ENCODE measurements at regions of chr10 and their contacts with region 1.

Region 1: GRCh38 chr10:119542988-119543813 is 682 bp upstream of the RGS10 start:
- DNase-seq: peak; percentile 78
- ATAC-seq: peak; percentile 37
- H3K4me3 Mint-ChIP-seq: peak overlapping the region; percentile 78
- H3K27ac Mint-ChIP-seq: peak overlapping the region; percentile 86
- H3K4me1 Mint-ChIP-seq: peaks cover 38% of the 10 kb centered on the region
- H3K27me3 Mint-ChIP-seq: peaks cover 14% of the 10 kb centered on the region

Region 2: GRCh38 chr10:119494236-119495060 is 48.8 kb before region 1 on chr10:
- CTCF ChIA-PET with region 1: interaction called, 16 read pairs
- POLR2A ChIA-PET with region 1: interaction called, 10 read pairs
- DNase-seq: no peak
- ATAC-seq: no peak
- H3K4me3 Mint-ChIP-seq: no peak overlapping the region
- H3K27ac Mint-ChIP-seq: peak overlapping the region; percentile 79
- H3K4me1 Mint-ChIP-seq: peaks cover 83% of the 10 kb centered on the region
- H3K27me3 Mint-ChIP-seq: no peaks in the 10 kb centered on the region

Region 3: DNA sequence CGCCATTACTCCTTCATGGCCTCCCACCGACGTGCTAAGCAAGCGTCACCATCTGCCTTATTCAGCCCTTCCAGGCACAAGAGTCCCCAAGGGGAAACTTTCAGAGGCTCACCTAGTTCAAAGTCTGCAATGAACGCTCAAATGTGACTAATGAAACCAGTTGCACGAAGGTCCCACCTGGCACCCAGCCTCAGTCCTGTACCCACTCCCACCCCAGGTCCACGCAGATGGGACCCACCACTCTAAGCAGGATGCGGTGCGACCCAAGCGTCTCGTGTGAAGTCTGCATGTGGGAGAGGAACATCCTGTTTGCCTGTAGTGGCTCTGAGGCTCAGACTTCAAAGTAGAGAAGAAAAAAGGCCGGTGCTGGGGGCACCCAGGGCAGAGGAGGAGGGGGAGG is 41.0 kb before region 1 on chr10:
- CTCF ChIA-PET with region 1: interaction called, 13 read pairs
- POLR2A ChIA-PET with region 1: interaction called, 10 read pairs
- DNase-seq: peak; percentile 90
- ATAC-seq: peak; percentile 84
- H3K4me3 Mint-ChIP-seq: peak overlapping the region; percentile 70
- H3K27ac Mint-ChIP-seq: peak overlapping the region; percentile 98
- H3K4me1 Mint-ChIP-seq: peaks cover 94% of the 10 kb centered on the region
- H3K27me3 Mint-ChIP-seq: no peaks in the 10 kb centered on the region

Region 4: DNA sequence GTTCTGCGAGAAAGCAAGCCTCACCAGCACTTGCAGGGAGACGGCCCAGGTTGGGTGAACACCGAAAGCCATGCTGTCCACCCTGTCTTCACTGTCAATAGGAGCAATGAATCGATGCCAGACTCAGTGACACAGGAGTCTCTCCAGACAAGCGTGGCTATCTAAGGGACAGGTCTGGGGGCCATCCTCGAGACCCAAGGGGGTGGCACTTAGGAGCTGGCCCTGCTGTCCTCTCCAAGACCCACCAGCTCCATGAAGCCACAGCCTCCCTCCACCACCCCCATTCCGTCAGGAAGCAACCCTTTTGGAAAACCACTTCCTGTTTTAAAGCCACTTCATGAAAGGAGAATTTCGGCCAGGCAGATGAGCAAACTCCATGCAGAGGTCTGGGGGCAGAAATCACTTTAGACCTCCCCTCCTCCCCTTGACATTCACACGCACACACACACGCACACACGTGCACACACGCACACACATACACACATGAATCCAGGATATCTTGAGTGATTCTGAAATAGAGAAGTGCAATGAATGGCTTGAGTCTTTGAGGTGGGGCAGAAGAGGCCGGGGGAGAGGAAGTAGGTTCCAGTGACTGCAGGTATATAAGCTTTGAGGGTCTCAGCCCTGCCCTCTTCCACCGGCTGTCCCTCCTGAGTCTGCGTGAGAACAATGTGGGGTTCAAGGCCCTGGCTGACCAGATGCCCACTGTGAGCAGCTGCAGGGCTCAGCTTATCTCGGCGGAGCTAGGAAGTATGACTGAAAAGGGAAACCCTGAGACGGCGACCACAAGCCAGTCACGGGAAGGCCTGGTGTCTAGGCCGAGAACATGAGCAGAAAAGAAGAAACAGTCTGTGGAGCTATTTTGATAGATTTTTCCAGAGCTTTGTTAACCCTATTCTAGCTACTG is 25.7 kb before region 1 on chr10:
- CTCF ChIA-PET with region 1: interaction called, 43 read pairs
- POLR2A ChIA-PET with region 1: interaction called, 25 read pairs
- DNase-seq: peak; percentile 73
- ATAC-seq: peak; percentile 62
- H3K4me3 Mint-ChIP-seq: peak overlapping the region; percentile 73
- H3K27ac Mint-ChIP-seq: peak overlapping the region; percentile 92
- H3K4me1 Mint-ChIP-seq: peaks cover 80% of the 10 kb centered on the region
- H3K27me3 Mint-ChIP-seq: no peaks in the 10 kb centered on the region

Region 5: DNA sequence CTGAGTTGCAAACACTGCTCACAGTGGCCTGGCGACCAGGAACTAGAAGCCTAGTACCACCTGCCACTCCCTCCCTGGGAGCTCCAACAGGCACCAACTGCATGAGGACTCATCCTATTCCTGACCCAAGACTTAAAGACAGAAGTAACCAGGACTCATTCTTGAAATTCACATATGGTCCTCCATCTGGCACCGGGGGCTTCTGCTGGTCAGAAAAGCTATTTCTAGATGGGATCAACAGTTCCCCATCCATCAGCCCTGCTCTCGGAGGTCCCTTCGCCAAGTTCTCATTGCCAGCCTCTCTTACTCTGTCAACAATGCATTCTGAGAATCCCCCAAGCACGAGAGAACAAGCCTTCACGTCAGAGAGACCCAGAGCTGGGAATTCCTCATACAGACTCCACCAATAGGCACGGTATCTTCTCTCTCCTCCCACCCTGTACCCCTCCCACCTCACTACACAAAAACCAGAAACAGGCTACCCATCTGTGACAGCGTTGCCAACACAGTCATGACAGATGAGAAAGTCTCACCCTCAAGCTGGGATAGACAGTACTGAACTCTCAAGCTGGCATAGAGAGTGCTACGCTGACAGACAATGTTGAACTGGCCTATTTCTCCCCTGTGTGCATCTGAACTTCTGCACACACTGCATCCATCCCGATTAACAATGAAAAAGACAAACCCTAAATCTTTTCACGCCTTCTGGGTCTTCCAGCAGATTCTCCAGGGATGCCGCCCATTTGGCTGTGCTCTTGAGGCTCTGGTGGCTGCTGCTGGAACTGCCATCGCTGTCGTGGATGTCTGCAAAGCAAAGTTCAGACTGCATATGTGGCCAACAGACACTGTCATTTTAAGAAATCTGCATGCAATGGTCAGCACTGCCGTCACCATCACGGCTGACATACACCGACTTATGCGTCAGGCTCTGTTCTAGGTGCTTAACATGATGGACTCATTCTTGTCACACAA is 16.3 kb before region 1 on chr10:
- CTCF ChIA-PET with region 1: interaction called, 28 read pairs
- POLR2A ChIA-PET with region 1: interaction called, 7 read pairs
- DNase-seq: no peak
- ATAC-seq: no peak
- H3K4me3 Mint-ChIP-seq: no peak overlapping the region
- H3K27ac Mint-ChIP-seq: peak overlapping the region; percentile 50
- H3K4me1 Mint-ChIP-seq: peaks cover 57% of the 10 kb centered on the region
- H3K27me3 Mint-ChIP-seq: no peaks in the 10 kb centered on the region

Region 6: GRCh38 chr10:119575506-119575905 is 32.3 kb after region 1 on chr10:
- CTCF ChIA-PET with region 1: interaction called, 10 read pairs
- POLR2A ChIA-PET with region 1: interaction called, 3 read pairs
- DNase-seq: peak; percentile 56
- ATAC-seq: peak; percentile 92
- H3K4me3 Mint-ChIP-seq: no peak overlapping the region
- H3K27ac Mint-ChIP-seq: peak overlapping the region; percentile 65
- H3K4me1 Mint-ChIP-seq: peaks cover 28% of the 10 kb centered on the region
- H3K27me3 Mint-ChIP-seq: no peaks in the 10 kb centered on the region

Region 7: DNA sequence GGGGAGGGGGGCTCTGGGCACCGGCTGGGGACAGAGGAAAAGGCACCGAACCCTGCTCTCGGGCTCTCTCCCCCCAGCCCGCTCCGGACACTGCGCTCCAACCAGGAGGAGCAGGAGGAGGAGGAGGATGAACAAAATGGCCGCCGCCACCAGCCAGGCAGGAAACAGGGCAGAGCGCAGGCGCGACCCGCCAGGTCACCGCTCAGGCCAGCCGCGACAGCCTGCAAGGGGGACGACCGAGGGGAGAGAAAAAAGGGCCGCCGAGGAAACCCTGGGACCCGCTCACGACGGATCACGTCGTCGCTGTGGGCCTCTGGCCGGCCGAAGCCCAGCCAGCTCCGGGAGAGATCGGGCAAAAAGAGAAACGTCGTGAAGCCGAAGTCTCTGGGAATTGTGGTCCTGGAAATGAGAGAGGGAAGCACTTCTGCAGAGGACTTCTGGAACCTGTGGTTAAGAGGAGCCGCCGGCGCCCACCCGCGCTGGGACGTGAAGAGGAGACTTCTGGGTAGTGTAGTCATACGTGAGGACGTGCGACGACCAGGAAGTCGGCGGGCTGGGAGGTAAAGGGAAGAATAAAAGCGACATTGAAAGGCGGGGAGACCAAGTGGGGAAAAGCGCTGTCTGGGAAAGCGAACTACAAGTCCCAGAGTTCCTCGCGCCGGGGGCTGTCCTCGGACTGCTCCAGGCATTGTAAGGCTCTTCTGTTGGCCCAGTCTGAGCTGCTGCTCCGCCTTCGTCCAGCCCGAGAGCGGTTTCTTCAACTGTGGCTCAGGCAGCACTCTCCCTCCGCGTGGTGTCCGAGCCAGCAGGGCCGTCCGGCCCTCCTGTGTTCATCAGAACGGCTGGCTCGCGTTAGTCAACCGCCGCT is 53.6 kb after region 1 on chr10 and contains the start of gene TIAL1:
- CTCF ChIA-PET with region 1: interaction called, 7 read pairs
- POLR2A ChIA-PET with region 1: interaction called, 10 read pairs
- DNase-seq: peak; percentile 97
- ATAC-seq: peak; percentile 89
- H3K4me3 Mint-ChIP-seq: peak within 1 kb of the TSS; percentile 93
- H3K27ac Mint-ChIP-seq: peak within 1 kb of the TSS; percentile 96
- H3K4me1 Mint-ChIP-seq: peaks cover 45% of the 10 kb centered on the region
- H3K27me3 Mint-ChIP-seq: no peaks in the 10 kb centered on the region
- total RNA-seq, gene TIAL1: 173 to 177 TPM

Region 8: DNA sequence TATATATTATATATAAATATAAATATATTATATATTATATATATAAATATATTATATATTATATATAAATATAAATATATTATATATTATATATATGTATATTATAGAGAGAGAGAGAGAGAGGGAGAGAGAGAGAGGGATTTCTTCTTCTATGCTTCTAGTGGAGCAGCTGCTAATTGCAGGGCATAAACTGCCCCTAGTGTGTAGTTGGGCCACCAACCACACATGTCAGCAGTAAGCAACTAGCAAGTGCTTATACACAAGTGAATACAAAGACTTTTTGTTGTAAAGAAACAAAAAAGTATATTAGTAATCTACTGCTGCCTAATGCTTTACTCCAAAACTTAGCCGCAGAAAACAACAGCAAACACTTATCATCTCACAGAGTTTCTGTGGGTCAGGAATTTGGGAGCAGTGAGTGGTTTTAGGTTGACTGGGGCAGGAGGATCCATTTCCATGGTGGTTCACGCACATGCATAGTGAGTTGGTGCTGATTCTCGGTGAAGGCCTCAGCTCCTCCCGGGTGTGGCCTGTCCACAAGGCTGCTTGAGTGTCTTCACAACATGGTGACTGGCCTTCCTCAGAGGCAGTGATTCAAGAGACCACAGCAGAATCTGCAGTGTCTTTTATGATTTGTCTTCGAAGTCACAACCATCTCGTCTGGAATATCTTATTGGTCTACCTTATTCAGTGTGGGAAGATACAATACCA is 82.5 kb after region 1 on chr10:
- CTCF ChIA-PET with region 1: no interaction called
- POLR2A ChIA-PET with region 1: no interaction called
- DNase-seq: no peak
- ATAC-seq: no peak
- H3K4me3 Mint-ChIP-seq: no peak overlapping the region
- H3K27ac Mint-ChIP-seq: no peak overlapping the region
- H3K4me1 Mint-ChIP-seq: peaks cover 6% of the 10 kb centered on the region
- H3K27me3 Mint-ChIP-seq: peaks cover 3% of the 10 kb centered on the region

Region 9: GRCh38 chr10:119859420-119860258 is 316.4 kb after region 1 on chr10:
- CTCF ChIA-PET with region 1: no interaction called
- POLR2A ChIA-PET with region 1: no interaction called
- DNase-seq: no peak
- ATAC-seq: peak; percentile 61
- H3K4me3 Mint-ChIP-seq: no peak overlapping the region
- H3K27ac Mint-ChIP-seq: no peak overlapping the region
- H3K4me1 Mint-ChIP-seq: peaks cover 41% of the 10 kb centered on the region
- H3K27me3 Mint-ChIP-seq: no peaks in the 10 kb centered on the region

Measured in activated CD8-positive, alpha-beta T cell treated with anti-CD3 and anti-CD28 coated beads, Interleukin-2, amount 10 ng/mL, durations not matched to agents 7 days and 5 days (primary cell).